ENCODE measurements at regions of chr2 and their contacts with region 1.

Region 1: DNA sequence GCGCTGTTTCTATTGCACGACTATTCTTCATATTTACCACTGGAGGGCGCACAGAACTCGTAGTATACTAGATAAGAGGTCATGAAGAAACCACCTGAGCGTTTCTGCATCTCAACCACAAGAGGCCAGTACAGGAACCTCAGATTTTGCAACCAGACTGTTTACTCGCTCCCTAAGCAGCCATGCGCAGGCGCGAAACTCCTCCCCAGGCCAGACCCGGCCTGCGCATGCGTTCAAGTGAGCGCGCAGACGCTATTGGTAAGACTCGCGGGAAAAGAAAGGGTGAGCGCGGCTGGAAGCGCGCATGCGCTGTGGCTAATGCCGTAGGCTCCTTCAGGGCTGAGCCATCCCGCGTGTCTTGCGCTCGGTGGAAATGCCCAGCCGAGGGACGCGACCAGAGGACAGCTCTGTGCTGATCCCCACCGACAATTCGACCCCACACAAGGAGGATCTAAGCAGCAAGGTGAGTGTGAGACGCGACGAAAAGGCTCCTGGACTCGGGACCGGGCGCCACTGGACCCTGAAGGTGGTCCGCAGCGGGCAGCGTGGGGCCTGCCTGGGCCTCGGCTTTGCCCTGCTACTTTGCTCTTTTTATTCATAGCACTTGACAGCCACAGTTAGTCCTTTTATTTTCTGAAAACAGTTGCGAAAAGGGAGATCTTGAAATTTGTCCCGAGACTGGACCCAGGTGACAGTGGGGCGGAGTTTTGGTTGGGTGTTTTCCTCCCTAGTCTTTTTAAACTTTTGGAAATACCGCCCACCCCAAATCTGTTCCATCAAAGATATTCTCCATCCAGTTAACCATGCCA is at the start of gene ASNSD1:
- DNase-seq: peak; percentile 100
- total RNA-seq, gene ASNSD1: 32.4 to 36.2 TPM

Region 2: DNA sequence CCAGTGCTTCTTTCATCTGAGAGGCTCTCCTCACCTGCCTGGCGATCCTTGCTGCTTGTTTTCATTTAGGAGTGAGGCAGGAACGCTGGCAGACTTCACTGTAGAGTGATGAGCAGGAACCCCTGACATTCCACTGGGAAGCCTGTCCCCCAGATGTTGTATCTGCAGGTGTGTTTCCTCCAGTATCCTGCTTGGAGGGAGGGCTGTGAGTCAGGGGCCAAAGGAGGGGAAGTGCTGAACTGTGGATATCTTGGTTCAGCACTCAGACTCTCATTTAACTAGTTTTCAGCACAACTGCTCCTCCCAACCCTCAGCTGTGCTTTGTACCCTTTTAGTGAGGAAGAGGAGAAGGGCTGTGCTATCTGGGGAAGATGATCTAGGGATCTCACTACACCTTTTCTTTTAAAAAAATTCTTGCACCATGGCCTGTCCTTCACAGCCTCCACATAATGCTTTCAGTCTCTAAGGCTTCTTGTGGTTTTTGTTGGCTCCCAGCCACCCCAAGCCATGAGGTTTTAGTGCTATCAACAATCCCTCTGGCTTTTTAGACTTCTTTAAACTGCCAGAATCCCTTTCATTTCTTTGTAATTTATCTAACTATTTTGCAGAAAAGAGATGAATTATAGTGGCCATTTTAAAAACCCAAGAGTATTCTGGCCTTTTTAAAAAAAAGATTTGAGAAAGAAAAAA is 24.3 kb after region 1 on chr2:
- intact Hi-C with region 1: no loop called
- DNase-seq: no peak

Region 3: GRCh38 chr2:189698020-189698887 is 36.9 kb after region 1 on chr2:
- intact Hi-C with region 1: loop called in 1 of 2 experiments (anchors 5 kb)
- DNase-seq: no peak

Measured in posterior vena cava (tissue), 2 donors.